ENCODE measurements at regions of chr1 and their contacts with region 1.

Region 1: DNA sequence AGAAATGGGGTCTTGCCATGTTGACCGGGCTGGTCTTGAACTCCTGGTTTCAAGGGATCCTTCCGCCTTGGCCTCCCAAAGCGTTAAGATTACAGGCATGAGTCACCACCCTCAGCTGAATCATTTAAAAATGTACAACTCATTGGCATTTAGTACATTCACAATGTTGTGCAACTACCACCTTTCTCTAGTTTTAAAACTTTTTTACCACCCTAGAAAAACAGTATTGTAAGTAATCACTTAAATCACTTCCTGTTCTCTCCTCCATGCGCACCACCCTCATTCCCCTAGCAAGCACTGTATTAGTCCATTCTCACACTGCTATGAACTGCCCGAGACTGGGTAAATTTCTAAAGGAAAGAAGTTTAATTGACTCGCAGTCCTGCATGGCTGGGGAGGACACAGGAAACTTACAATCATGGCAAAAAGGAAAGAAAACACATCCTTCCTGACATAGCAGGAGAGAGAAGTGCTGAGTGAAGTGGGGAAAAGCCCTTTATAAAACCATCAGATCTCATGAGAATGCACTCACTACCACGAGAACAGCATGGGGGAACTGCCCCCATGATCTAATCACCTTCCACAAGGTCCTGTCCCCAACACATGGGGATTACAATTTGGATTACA is 14.4 kb upstream of the THEM5 start:
- DNase-seq: no peak
- H3K4me3 ChIP-seq: no peak overlapping the region
- H3K4me1 ChIP-seq: peaks cover 4% of the 10 kb centered on the region
- H3K27me3 ChIP-seq: no peaks in the 10 kb centered on the region

Region 2: DNA sequence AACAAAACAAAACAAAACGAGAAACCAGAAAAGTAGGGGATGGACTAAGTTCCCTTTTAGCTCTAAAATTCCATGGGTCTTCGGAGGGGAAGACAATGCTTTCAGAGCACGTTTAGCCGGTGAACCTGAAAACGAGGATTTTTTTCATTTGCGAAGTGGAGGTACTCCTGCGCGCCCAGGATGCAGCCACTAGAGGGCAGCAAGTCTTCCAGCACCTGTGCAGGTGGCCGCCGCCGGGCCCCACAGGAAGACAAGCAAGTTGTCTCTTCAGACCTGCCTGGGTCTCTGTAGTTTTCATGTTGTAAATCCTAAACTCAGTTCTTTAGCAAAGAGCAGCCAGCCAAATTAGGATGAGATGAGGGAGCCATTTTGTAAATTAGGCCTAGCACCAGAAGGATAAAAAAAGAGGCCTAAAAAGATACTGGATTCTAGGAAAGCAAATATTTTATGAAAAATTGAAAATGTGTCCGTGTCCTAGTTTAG is 273.7 kb before region 1 on chr1:
- in situ Hi-C with region 1: no loop called
- DNase-seq: peak; percentile 59 to 87
- H3K4me3 ChIP-seq: 0 out of 2 replicates have a peak overlapping the region, but pooled peaks have one; percentile 1
- H3K4me1 ChIP-seq: peaks cover 5% of the 10 kb centered on the region
- H3K27me3 ChIP-seq: no peaks in the 10 kb centered on the region

Region 3: DNA sequence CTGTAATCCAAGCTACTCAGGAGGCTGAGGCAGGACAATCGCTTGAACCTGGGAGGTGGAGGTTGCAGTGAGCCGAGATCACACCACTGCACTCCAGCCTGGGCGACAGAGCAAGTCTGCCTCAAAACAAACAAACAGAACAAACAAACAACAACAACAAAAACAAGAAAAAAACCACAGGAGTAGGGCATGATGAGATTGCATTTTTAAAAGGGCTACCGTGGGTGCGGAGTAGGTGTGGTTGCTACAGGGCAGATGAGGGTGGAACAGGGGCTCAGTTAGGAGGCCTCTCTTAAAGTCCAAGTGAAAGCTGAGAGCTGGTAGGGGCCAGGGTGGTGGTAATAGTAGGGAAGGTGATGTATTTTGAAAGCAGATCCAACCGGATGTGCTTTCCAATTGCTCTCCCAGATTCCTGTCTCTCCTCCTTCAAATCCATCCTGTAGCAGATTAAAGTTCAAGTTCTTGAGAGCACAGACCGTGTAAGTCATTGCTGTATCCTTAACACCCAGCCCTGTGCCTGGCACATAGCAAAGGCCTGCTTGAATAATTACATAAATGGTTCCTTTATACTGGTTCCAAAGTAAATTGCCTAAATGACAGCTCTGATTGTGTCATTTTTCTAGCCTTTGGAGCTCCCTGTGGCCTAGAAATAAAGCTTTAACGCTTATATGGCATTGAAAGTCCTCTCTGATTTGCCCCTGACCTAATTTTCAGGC is 58.5 kb before region 1 on chr1:
- in situ Hi-C with region 1: loop called (anchors 10 kb)
- DNase-seq: peak; percentile 22 to 25
- H3K4me3 ChIP-seq: no peak overlapping the region
- H3K4me1 ChIP-seq: peaks cover 20% of the 10 kb centered on the region
- H3K27me3 ChIP-seq: peaks cover 7% of the 10 kb centered on the region; the same call in 1 of the 2 replicates

Measured in HAP-1 (cell line).